GM23248 (cell line): ENCODE measurements at regions of chr6 and their contacts with region 1.

Region 1: GRCh38 chr6:16332175-16332542 is 93.8 kb downstream of the GMPR start:
- DNase-seq: peak; percentile 78
- H3K4me3 ChIP-seq: 0 out of 2 replicates have a peak overlapping the region, but pooled peaks have one; percentile 28
- H3K27ac ChIP-seq: peak overlapping the region; percentile 53
- H3K4me1 ChIP-seq: peaks cover 44% of the 10 kb centered on the region
- H3K27me3 ChIP-seq: no peaks in the 10 kb centered on the region

Region 2: DNA sequence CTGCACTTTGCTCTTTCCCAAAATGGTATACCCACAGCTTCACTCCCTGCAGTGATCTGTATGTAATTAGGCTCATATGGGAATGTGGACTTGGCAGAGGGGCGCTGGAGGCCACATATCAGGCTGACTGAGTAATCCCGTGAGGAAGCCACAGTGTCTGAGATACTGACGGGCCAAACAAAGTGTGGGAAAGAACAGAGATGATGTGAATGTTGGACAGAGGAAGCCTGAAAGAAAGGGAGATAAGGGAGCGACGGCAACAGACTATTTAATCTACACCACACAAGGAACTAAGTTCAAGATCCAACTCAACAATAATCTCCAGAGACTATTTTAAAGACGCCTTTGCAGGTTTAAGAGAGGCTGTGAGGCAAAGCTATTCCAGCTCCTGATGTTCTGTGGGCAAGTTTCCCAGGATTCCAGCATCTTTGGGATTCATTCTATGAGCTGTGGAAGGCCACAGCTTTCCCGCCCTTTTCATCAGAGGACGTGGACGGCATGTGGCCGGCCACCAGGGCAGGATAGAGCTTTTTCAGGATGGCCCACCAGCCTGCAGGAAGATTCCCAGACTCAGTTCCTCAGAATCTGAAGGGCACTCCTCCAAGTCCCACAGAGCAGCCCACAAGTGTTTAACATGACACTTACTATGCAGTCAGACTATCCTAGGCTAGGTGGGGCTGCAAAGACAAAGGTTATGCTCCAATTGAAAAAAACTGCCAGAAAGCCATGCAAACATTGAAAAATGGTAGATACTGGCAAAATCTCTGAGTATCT is 191.6 kb after region 1 on chr6:
- in situ Hi-C with region 1: no loop called
- DNase-seq: peak; percentile 96
- H3K4me3 ChIP-seq: 0 out of 2 replicates have a peak overlapping the region, but pooled peaks have one; percentile 1
- H3K27ac ChIP-seq: peak overlapping the region; percentile 85
- H3K4me1 ChIP-seq: peaks cover 12% of the 10 kb centered on the region
- H3K27me3 ChIP-seq: no peaks in the 10 kb centered on the region

Region 3: DNA sequence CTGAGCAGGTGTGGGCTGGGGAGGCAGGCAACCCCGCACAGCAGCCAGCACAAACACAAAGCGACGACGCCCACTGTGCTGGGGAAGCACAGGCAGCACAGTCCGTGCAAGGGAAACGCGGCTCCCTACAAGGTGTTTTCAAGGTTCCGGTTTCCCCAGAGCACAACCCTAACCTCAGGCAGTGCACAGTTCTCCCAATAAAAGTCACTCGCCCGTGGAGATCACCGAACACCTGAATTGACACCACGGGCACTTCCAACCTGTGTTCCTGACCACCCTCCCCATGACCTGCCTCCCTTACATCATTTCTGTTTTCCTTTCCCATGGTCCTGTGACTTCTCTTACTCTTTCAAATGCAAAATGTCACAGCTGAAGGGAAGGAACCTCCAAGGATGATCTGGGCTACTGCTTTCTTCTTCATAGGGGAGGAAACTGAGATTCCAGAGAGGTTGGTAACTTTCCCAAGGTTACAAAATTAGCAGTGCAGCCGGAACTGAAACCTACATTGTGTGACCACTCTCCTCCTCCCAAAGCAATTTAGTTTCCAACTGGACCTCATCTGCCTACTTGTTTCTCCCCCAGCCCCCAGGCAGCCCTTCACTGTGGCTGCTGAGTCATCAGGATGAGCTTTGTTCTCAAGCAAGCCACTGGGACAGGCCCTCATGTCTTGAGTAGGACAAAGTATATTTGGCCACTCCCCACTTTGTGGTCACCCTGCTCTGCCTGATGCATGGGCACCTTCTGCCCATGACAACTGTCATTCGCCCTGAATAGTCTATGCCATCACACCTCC is 303.8 kb after region 1 on chr6:
- in situ Hi-C with region 1: no loop called
- DNase-seq: peak; percentile 74
- H3K4me3 ChIP-seq: no peak overlapping the region
- H3K27ac ChIP-seq: peak overlapping the region; percentile 20; the same call in 1 of the 2 replicates
- H3K4me1 ChIP-seq: peaks cover 28% of the 10 kb centered on the region
- H3K27me3 ChIP-seq: no peaks in the 10 kb centered on the region

Region 4: GRCh38 chr6:16761471-16762267 is 429.5 kb after region 1 on chr6:
- in situ Hi-C with region 1: loop called (anchors 10 kb)
- DNase-seq: peak; percentile 95
- H3K4me3 ChIP-seq: peak overlapping the region; percentile 95
- H3K27ac ChIP-seq: peak overlapping the region; percentile 96
- H3K4me1 ChIP-seq: peaks cover 49% of the 10 kb centered on the region
- H3K27me3 ChIP-seq: no peaks in the 10 kb centered on the region

Region 5: DNA sequence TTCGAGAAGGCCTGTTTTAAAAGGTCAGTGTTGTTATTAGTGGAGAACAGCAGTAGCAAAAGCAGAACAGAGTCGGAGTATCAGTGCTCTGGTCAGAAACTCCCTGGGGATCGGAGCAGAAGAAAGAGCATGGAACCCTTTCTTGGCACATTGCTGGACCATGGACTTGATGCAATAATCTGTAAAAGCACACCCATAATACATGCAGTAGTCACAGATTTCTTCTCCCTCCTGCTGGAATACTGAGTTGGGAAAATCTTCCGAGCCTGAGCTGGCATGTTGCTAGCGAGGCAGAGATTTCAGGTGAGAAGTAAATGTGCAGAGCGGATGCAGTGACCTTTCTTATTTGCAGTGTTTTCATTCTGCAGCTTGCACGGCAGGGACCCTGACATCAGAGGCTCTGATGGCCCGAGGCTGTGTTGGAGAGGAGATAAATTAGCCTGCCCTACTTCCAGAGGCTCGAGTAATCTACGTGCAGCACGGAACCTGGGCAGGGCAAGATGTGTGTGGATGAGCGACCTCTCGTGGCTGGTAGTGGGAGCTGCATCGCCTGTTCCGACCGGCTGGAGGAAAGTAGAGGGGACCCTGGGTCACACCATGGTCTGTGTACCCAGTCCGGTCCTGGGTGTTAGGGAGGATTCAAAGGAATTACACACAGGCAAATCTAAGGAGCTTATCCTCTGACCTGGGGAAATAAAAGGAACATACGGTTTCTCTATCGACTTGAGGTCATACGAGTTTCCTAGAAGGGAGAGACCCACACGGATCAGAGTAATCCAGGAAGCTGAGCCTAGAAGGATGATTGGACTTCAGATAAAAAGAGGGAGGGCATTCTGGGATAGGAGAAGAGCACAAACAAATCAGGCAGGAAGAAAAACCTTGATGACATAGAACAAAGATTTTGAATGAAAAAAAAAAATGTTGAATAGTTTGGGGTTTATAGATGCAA is 632.7 kb after region 1 on chr6:
- in situ Hi-C with region 1: loop called (anchors 25 kb)
- DNase-seq: peak; percentile 83
- H3K4me3 ChIP-seq: no peak overlapping the region
- H3K27ac ChIP-seq: no peak overlapping the region
- H3K4me1 ChIP-seq: peaks cover 45% of the 10 kb centered on the region
- H3K27me3 ChIP-seq: no peaks in the 10 kb centered on the region

Region 6: DNA sequence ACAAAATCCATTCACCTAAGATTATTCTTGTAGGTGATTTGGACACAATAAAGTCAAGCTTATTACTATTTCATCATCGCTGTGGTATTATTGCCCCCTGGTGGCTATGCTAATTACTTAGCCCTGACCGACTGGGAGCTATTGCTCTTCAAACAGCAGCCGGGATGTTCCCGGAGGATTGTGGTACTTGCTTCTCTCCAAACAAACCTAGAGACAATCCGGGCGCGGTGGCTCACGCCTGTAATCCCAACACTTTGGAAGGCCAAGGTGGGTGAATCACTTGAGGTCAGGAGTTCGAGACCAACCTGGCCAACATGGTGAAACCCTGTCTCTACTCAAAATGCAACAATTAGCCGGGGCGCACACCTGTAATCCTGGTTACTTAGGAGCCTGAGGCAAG is 754.3 kb after region 1 on chr6:
- in situ Hi-C with region 1: loop called (anchors 25 kb)
- DNase-seq: peak; percentile 81
- H3K4me3 ChIP-seq: no peak overlapping the region
- H3K27ac ChIP-seq: no peak overlapping the region
- H3K4me1 ChIP-seq: peaks cover 6% of the 10 kb centered on the region
- H3K27me3 ChIP-seq: no peaks in the 10 kb centered on the region